Breast epithelium (tissue), 4 donors: ENCODE measurements at regions of chr9 and their contacts with region 1.

Region 1: GRCh38 chr9:72489986-72490385 is 31.4 kb upstream of the TMC1 start:
- DNase-seq: no peak
- H3K4me3 ChIP-seq: no peak overlapping the region
- H3K27ac ChIP-seq: no peak overlapping the region
- H3K4me1 ChIP-seq: no peaks in the 10 kb centered on the region
- H3K27me3 ChIP-seq: no peaks in the 10 kb centered on the region
- CTCF ChIP-seq: no peak
- POLR2A ChIP-seq: no peak

Region 2: DNA sequence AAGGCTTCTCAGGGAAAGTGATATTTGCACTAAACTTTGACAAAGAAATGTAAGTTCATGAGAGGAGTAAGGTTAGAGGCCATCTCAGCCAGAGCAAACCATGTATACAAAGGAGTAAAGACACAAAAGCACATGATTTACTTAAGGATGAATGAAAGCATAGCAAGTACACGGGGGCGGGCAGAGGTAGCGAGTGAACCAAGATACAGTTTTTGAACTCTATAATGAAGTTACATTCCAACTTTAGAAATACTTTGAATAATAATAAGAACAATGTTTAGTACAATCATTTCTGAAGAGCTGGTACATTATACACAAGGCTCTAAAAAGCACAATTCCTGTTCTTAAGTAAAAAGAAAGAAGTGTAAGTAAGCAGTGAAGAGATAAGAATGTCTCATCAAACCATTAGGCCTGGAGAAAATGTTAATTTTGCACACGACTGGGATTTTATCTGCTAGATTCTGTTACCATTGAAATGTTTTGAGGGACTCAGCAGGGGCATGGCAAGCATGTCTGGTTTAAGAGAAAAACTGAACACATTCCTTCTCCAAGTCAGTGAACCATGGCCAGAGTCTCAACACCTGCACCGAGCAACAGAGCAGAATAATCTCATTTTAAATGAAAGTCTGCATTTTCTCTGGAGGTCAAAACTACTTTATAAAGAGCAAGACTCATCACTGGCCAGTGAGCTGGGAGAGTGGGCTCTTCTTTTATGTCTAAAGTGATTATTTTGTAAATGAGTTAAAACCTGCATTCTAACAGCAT is 1220.9 kb before region 1 on chr9:
- intact Hi-C with region 1: loop called (anchors 5 kb)
- DNase-seq: no peak
- H3K4me3 ChIP-seq: no peak overlapping the region
- H3K27ac ChIP-seq: no peak overlapping the region
- H3K4me1 ChIP-seq: no peaks in the 10 kb centered on the region
- H3K27me3 ChIP-seq: no peaks in the 10 kb centered on the region
- CTCF ChIP-seq: no peak
- POLR2A ChIP-seq: no peak